HEK293T (cell line): ENCODE measurements at regions of chr6 and their contacts with region 1.

Region 1: DNA sequence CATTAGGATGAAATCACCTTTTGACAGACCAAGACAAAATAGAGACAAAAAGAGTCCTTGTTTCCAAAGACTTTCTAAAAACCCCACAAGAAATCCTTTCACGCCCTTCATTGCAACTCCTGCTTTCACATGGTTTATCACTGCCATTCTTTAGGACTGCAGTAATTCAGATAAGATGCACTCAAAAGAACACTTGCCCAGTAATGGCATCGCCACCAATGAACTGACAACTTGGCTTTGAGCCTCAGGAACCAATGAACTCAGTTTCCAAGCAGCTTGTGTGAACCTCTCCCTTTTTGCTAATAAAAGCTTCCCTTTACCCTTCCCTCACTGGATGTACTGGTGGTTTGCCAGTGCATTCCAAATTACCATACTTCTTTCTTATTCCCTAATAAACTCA is 21.8 kb downstream of the OSTM1 start:
- DNase-seq: no peak

Region 2: DNA sequence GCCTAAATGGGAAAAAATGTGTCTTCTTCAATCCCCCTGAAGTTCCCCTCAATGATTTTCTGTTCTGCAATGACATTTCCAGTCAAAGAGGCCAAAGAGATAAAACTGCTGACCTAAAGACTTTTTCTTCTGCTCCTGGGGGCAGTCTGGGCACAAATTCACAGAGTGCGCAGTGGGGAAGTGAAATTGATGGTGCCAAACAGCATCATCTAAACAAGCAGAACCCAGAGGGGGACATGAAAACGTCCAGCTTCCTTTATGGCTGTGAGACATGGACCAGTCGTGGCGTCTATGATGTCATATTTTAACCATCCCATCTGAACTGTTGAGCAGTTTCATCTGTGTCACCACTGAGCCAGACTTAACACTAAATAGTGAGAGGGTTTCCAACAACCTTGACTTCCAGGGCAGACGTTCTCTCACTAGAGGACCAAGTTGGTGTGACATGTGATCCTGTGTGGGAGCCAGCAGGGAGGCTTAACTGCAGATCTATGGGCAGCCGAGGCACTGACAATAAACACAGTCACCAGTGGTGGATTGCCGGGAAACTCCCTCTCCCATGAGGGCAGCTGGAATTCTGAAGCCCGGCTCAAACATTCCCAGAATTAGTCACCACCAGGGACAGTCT is 241.0 kb before region 1 on chr6:
- CTCF ChIA-PET with region 1: interaction called, 10 read pairs
- POLR2A ChIA-PET with region 1: no interaction called
- DNase-seq: no peak

Region 3: DNA sequence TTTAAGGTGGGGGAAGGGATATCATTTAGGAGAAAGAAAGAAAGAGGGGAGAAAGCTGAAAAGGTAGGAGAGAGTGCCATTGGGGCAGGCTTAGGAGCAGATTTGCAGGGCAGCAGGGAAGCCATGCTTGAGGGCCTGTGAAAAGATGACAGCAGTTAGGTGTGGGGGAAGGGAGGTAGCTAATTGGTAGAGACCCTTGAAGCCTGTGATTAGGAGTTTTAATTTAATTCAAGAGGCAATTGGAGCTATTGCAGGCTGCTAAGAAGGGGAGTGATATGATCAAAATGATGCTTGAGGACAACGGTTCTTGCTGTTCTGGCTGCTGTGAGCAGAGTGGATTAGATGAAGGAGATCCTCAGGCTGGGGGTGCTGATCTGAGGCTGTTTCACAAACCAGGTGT is 70.2 kb before region 1 on chr6:
- CTCF ChIA-PET with region 1: interaction called, 40 read pairs
- POLR2A ChIA-PET with region 1: no interaction called
- DNase-seq: no peak